BJ (cell line): ENCODE measurements at regions of chr10 and their contacts with region 1.

Region 1: GRCh38 chr10:102267748-102268147 is 22.4 kb downstream of the GBF1 start:
- DNase-seq: no peak
- H3K4me3 ChIP-seq: no peak overlapping the region
- H3K27me3 ChIP-seq: no peaks in the 10 kb centered on the region
- CTCF ChIP-seq: no peak

Region 2: DNA sequence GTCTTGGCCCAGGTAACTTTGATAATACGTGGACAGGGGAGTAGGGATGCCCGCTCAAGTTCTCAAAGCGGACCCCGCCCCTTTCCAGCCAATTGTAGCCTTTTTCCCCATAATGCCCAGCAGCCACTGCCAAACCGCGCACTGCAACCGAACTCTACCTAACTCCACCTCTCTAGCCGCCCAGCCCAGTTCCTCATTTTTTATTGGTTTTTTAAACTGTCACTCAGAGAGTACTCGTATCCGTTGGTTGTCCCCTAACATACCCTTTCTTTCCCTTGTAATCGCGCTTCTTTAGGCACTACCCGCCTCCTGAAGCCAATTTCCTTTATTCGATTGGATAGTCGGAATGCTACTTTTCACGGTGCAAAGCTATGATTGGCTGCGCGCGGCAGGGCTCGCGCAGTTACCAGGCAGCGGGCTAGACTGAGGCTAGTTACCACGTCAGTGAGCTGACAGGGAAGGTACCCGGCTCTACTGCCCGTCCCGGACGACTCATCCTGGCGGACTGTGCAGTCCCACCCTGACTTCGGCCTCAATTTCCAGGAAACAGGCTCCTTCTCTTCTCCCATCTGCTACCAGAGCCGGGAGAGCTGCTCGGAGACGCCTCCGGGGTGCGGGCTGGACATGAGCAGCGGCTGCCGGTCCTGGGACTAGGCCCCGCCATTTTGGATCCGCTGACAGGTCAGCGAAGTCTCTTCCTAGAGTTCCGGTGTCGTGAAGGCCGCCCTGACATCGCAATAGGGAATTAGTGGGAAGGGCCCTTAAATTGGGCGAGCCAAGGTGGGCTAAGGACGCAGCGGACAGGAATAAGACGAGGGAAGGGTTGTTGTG is 22.4 kb before region 1 on chr10 and contains the start of gene GBF1:
- CTCF ChIA-PET with region 1: interaction called, 13 read pairs
- POLR2A ChIA-PET with region 1: no interaction called
- DNase-seq: peak; percentile 100
- H3K4me3 ChIP-seq: peak within 1 kb of the TSS; percentile 96
- H3K27me3 ChIP-seq: peaks cover 5% of the 10 kb centered on the region
- CTCF ChIP-seq: no peak
- polyA plus RNA-seq, gene GBF1: 19.0 and 28.4 TPM in 2 replicates

Region 3: GRCh38 chr10:102335184-102335583 is 67.4 kb after region 1 on chr10:
- CTCF ChIA-PET with region 1: no interaction called
- POLR2A ChIA-PET with region 1: interaction called, 10 read pairs
- DNase-seq: no peak
- H3K4me3 ChIP-seq: no peak overlapping the region
- H3K27me3 ChIP-seq: no peaks in the 10 kb centered on the region
- CTCF ChIP-seq: no peak